K562 (cell line): ENCODE measurements at regions of chr13 and their contacts with region 1.

Region 1: GRCh38 chr13:75135325-75135825 is 346.6 kb downstream of the TBC1D4 start:
- DNase-seq: no peak
- ATAC-seq: no peak
- H3K4me3 ChIP-seq: no peak overlapping the region
- H3K27ac ChIP-seq: no peak overlapping the region
- H3K4me1 ChIP-seq: no peaks in the 10 kb centered on the region
- H3K27me3 ChIP-seq: no peaks in the 10 kb centered on the region
- CTCF ChIP-seq: no peak
- EP300 ChIP-seq: no peak
- POLR2A ChIP-seq: no peak
- RAD21 ChIP-seq: no peak

Region 2: GRCh38 chr13:75013818-75014217 is 121.6 kb before region 1 on chr13:
- CTCF ChIA-PET with region 1: no interaction called
- POLR2A ChIA-PET with region 1: no interaction called
- in situ Hi-C with region 1: no loop called
- intact Hi-C with region 1: loop called (anchors 2 kb)
- DNase-seq: no peak
- ATAC-seq: no peak
- H3K4me3 ChIP-seq: no peak overlapping the region
- H3K27ac ChIP-seq: no peak overlapping the region
- H3K4me1 ChIP-seq: no peaks in the 10 kb centered on the region; a peak in 1 of 5 replicates
- H3K27me3 ChIP-seq: no peaks in the 10 kb centered on the region
- CTCF ChIP-seq: no peak
- EP300 ChIP-seq: no peak
- POLR2A ChIP-seq: no peak
- RAD21 ChIP-seq: no peak

Region 3: GRCh38 chr13:75482070-75482819 is 346.9 kb after region 1 on chr13 and contains the start of gene TBC1D4:
- CTCF ChIA-PET with region 1: no interaction called
- POLR2A ChIA-PET with region 1: no interaction called
- in situ Hi-C with region 1: no loop called
- intact Hi-C with region 1: no loop called
- DNase-seq: peak; percentile 55 to 78 (median 63)
- ATAC-seq: peak; percentile 89
- H3K4me3 ChIP-seq: peak within 1 kb of the TSS; percentile 67
- H3K27ac ChIP-seq: peak within 1 kb of the TSS; percentile 55; the same call in 1 of the 3 replicates
- H3K4me1 ChIP-seq: peaks cover 0 to 20% of the 10 kb centered on the region in 2 experiments; a peak in 4 of 5 replicates
- H3K27me3 ChIP-seq: no peaks in the 10 kb centered on the region
- CTCF ChIP-seq: peak; percentile 61 to 71 (median 64)
- EP300 ChIP-seq: no peak
- POLR2A ChIP-seq: no peak
- RAD21 ChIP-seq: peak; percentile 56 to 64
- polyA plus RNA-seq, gene TBC1D4: 2.8 to 2.9 TPM